ENCODE measurements at regions of chr7 and their contacts with region 1.

Region 1: DNA sequence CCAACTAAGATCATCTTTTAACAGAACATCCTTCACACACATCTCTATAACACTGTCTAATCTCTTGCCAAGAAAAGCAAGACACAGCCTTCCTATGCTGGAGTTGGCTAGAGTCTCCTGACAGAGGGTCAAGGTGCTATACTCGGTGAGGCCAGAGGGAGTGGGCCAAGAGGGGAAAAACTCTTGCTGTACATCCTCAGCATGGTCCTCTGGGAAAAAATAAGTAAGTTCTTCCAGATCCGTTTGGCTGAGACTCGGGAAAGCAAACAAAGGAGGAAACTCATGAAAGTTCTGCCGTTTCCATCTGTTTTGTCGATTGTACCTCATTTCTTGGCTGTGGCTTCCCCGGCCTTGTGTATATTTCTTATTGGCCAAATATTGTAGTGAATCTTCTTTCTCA is 33.9 kb downstream of the VWDE start:
- DNase-seq: peak in 1 of 2 donors; percentile 10
- ATAC-seq: peak in 4 of 8 donors; percentile 28 to 76 (median 62)
- H3K4me3 ChIP-seq: no peak overlapping the region
- H3K27ac ChIP-seq: no peak overlapping the region
- H3K4me1 ChIP-seq: peaks cover 0 to 14% (median 0%) of the 10 kb centered on the region in 9 donors
- H3K27me3 ChIP-seq: no peaks in the 10 kb centered on the region
- CTCF ChIP-seq: no peak

Region 2: DNA sequence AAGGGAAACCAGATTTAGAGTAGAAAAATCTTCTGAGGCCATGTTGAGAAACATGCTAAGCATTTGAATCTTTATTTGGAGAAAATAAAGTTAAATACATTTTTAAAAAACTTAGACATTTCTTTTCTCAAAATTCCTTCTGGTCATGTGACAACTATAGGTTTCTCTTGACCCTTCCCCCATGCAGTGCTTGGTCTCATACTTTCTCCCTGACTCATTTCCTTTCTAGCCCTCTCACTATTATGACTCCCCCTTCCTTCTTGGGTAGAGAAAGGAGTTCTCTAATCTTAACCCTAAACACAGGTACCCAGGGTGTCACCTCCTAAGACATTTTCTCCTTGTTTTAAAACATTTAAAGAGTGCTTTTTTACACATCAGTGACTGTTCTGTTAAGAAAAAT is 338.1 kb before region 1 on chr7:
- intact Hi-C with region 1: no loop called
- DNase-seq: no peak
- ATAC-seq: no peak
- H3K4me3 ChIP-seq: no peak overlapping the region
- H3K27ac ChIP-seq: no peak overlapping the region
- H3K4me1 ChIP-seq: no peaks in the 10 kb centered on the region
- H3K27me3 ChIP-seq: no peaks in the 10 kb centered on the region
- CTCF ChIP-seq: no peak

Region 3: GRCh38 chr7:12508554-12508953 is 138.8 kb after region 1 on chr7:
- intact Hi-C with region 1: no loop called
- DNase-seq: no peak
- ATAC-seq: no peak
- H3K4me3 ChIP-seq: no peak overlapping the region
- H3K27ac ChIP-seq: no peak overlapping the region
- H3K4me1 ChIP-seq: no peaks in the 10 kb centered on the region
- H3K27me3 ChIP-seq: no peaks in the 10 kb centered on the region
- CTCF ChIP-seq: no peak

Region 4: GRCh38 chr7:13656330-13656729 is 1286.6 kb after region 1 on chr7:
- intact Hi-C with region 1: loop called in 1 of 10 experiments (anchors 5 kb)
- DNase-seq: no peak
- ATAC-seq: no peak
- H3K4me3 ChIP-seq: no peak overlapping the region
- H3K27ac ChIP-seq: no peak overlapping the region
- H3K4me1 ChIP-seq: no peaks in the 10 kb centered on the region
- H3K27me3 ChIP-seq: no peaks in the 10 kb centered on the region
- CTCF ChIP-seq: no peak

Measured in heart right ventricle (tissue), 16 donors.